Caco-2 (cell line): ENCODE measurements at regions of chr1 and their contacts with region 1.

Region 1: GRCh38 chr1:160261893-160262794 is at the start of gene DCAF8:
- DNase-seq: peak; percentile 98
- H3K4me3 ChIP-seq: peak within 1 kb of the TSS; percentile 99
- H3K4me3 Mint-ChIP-seq: peak within 1 kb of the TSS; percentile 92
- H3K27ac Mint-ChIP-seq: peak within 1 kb of the TSS; percentile 97
- H3K4me1 ChIP-seq: no peaks in the 10 kb centered on the region
- H3K4me1 Mint-ChIP-seq: peaks cover 15% of the 10 kb centered on the region
- H3K27me3 ChIP-seq: no peaks in the 10 kb centered on the region
- H3K27me3 Mint-ChIP-seq: no peaks in the 10 kb centered on the region
- CTCF ChIP-seq: no peak
- total RNA-seq, gene DCAF8: 112 and 116 TPM in 2 replicates

Region 2: GRCh38 chr1:160291248-160292220 is 29.4 kb after region 1 on chr1:
- CTCF ChIA-PET with region 1: interaction called, 12 read pairs
- POLR2A ChIA-PET with region 1: interaction called, 7 read pairs
- intact Hi-C with region 1: no loop called
- DNase-seq: peak; percentile 71 to 72
- H3K4me3 ChIP-seq: no peak overlapping the region
- H3K4me3 Mint-ChIP-seq: no peak overlapping the region
- H3K27ac Mint-ChIP-seq: no peak overlapping the region
- H3K4me1 ChIP-seq: no peaks in the 10 kb centered on the region
- H3K4me1 Mint-ChIP-seq: peaks cover 4% of the 10 kb centered on the region
- H3K27me3 ChIP-seq: no peaks in the 10 kb centered on the region
- H3K27me3 Mint-ChIP-seq: no peaks in the 10 kb centered on the region
- CTCF ChIP-seq: peak; percentile 66 to 77